ENCODE measurements at regions of chr1 and their contacts with region 1.

Region 1: DNA sequence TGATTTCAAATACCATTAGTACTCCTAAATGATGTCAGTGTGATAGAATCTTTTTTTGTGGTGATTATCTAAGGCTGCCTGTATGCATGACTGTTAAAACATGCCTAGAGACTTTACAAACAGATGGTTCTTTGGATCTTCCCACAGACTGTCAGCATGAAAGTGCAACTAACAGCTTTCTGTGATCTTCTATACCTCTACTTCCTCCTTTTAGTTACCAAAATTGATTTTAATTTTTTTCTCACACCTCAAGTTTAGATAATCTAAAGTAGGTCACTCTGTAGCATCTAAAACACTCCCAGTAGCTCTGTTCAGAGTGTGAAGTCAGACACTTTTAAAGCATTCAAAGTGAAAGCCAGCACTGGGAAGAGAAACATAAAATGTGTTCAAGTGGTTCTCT is 534.5 kb downstream of the PTPRC start:
- DNase-seq: no peak
- H3K4me3 Mint-ChIP-seq: no peak overlapping the region
- H3K27ac Mint-ChIP-seq: peak overlapping the region; percentile 24
- H3K4me1 Mint-ChIP-seq: peaks cover 39% of the 10 kb centered on the region
- H3K27me3 Mint-ChIP-seq: peaks cover 36% of the 10 kb centered on the region

Region 2: DNA sequence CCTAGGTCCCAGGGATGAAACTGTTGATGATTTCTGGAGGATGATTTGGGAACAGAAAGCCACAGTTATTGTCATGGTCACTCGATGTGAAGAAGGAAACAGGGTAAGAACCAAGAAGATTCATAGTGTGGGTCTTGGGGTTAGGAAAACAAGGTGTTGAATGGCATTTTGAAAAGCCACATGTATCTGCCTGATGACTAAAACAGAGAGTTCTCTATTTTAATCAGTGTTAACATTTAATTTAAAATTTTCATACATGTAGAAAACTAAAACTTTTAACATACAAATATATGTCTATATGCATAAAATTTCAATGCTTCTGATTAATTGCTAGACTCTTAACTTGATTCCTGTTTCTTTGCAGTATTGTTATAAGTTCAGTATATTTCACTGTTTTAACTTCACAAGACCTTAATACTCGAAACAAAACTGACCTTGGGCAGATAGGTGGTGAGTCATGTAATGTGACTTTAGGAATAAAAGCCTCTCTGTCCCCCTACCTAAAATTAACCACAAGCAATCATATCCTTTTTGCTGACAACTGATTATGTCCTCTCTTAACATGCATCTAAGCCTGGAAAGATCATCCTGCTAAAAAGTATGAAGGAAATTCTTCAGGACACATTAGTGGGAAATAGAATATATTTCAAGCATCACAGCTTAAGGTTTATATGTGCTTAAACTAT is 438.9 kb before region 1 on chr1:
- intact Hi-C with region 1: loop called (anchors 1 kb)
- DNase-seq: no peak
- H3K4me3 Mint-ChIP-seq: no peak overlapping the region
- H3K27ac Mint-ChIP-seq: peak overlapping the region; percentile 73
- H3K4me1 Mint-ChIP-seq: peaks cover 62% of the 10 kb centered on the region
- H3K27me3 Mint-ChIP-seq: no peaks in the 10 kb centered on the region

Region 3: DNA sequence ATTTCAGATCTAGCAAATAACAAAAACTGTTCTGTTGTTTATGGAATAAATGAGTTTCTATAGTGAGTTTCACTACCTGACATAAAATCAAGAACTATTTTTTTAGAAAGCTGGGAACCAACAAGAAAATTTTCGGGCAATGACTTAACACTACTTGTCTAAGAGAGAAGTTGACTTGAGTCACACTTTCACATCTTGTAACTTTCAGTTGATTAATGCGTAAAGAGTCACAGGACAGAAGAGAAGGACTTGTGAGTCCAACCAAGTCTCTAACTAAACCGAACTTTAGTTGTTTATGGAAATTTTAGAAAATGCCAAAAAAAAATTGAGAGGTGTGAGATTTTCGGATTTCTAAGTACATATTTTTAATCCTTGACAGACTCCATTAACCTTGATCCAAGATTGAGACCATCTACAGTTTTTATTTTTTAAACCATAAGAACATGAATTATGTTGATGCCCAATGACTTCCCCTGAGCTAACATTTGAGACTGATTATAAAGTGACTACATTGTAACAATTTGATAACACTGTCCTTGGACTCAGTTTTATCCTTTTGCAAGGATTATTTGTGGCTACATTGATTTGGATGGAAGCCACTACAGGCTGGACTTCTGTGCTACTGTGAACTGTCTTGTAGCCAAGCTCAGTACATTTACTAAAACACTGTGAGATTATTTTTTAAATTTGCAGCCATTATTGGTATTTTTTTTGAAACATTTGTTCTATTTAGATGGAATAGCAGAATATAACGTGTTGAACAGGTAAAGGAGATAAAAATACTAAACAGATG is 250.5 kb before region 1 on chr1:
- intact Hi-C with region 1: loop called (anchors 1 kb)
- DNase-seq: no peak
- H3K4me3 Mint-ChIP-seq: peak overlapping the region; percentile 55
- H3K27ac Mint-ChIP-seq: peak overlapping the region; percentile 71
- H3K4me1 Mint-ChIP-seq: peaks cover 73% of the 10 kb centered on the region
- H3K27me3 Mint-ChIP-seq: no peaks in the 10 kb centered on the region

Region 4: DNA sequence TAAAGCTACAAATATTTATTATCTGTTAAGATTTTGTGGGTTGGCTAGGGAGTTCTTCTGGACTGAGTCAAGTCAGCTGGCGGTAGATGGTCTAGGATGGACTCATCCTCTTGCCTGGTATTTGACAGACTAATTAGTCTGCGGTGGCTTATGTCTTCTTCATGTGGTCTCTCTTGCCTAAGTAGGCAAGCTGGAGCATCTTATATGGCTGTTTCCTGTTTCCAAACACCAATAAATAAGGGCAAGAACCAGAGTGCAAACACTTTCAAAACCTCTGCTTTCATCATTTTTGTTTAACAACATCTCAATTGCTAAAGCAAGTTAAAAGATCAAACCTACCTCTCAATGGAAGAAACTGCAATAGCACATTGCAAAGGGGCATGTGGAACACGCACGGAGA is 49.7 kb before region 1 on chr1:
- intact Hi-C with region 1: loop called (anchors 5 kb)
- DNase-seq: no peak
- H3K4me3 Mint-ChIP-seq: no peak overlapping the region
- H3K27ac Mint-ChIP-seq: no peak overlapping the region
- H3K4me1 Mint-ChIP-seq: peaks cover 11% of the 10 kb centered on the region
- H3K27me3 Mint-ChIP-seq: peaks cover 10% of the 10 kb centered on the region

Region 5: DNA sequence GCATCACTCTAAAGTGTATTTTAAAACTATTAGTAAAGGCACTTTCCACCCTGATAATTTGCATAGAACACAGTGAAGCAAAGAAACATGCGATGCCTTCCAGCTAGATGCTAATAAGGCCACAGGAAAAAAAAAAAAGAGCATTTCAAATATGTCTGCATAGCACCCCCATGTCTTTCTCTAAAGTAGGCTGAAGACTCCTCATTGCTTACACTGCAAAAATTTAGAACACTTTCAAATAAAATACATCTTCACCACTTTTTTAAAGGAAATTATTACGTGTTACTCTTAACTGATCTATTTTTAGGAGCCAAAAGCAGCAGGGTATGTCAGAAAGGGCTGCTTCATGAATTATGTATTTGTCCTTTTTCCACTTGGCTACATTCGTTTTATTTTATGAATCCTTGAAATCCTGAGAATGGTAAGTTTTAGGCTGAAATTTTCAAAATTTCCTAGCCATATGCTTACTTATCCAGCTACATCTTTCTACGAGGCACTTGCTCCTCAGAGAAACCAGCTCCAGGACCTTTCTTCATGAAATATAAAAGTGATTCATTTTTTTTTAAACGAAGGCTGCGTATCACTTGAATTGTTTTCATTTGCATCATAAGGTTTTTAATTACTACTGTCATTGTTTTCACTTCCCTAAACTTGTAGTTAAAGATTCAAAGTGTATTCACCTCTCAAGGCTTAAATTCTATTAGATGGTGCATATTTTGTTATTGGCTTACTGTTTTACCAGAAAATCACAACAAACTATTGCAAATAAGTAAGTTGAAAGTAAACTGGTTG is 21.5 kb before region 1 on chr1:
- intact Hi-C with region 1: no loop called
- DNase-seq: no peak
- H3K4me3 Mint-ChIP-seq: no peak overlapping the region
- H3K27ac Mint-ChIP-seq: no peak overlapping the region
- H3K4me1 Mint-ChIP-seq: no peaks in the 10 kb centered on the region
- H3K27me3 Mint-ChIP-seq: peaks cover 40% of the 10 kb centered on the region

Region 6: DNA sequence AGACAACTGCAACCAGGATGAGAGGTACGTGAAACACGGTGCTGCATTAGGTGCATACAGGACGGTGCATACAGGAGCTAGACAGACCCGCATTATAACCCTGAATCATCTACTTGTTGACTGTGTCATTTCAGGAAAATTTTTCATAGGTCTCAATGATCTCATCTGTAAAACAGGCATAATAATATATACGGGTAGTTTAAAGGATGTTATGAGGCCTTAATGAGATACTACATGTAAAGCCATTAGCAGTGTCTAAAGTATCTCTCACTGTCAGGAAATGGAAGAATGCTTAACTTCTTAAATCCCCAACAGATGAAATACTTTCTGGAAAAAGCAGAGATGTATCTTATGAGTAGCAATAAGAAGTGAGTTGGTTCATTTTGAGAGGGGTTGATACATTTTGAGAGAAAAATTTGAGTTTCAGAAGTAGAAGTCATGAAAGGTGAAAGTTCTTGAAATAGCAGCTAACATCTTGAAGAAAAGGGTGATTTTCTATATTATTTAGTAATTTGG is 135.0 kb after region 1 on chr1:
- intact Hi-C with region 1: loop called (anchors 5 kb)
- DNase-seq: no peak
- H3K4me3 Mint-ChIP-seq: no peak overlapping the region
- H3K27ac Mint-ChIP-seq: no peak overlapping the region
- H3K4me1 Mint-ChIP-seq: peaks cover 14% of the 10 kb centered on the region
- H3K27me3 Mint-ChIP-seq: peaks cover 21% of the 10 kb centered on the region

Region 7: GRCh38 chr1:199551967-199552565 is 378.7 kb after region 1 on chr1:
- intact Hi-C with region 1: no loop called
- DNase-seq: no peak
- H3K4me3 Mint-ChIP-seq: no peak overlapping the region
- H3K27ac Mint-ChIP-seq: no peak overlapping the region
- H3K4me1 Mint-ChIP-seq: no peaks in the 10 kb centered on the region
- H3K27me3 Mint-ChIP-seq: peaks cover 4% of the 10 kb centered on the region

Region 8: GRCh38 chr1:200150720-200151119 is 977.4 kb after region 1 on chr1:
- intact Hi-C with region 1: loop called (anchors 5 kb)
- DNase-seq: no peak
- H3K4me3 Mint-ChIP-seq: no peak overlapping the region
- H3K27ac Mint-ChIP-seq: peak overlapping the region; percentile 73
- H3K4me1 Mint-ChIP-seq: peaks cover 47% of the 10 kb centered on the region
- H3K27me3 Mint-ChIP-seq: no peaks in the 10 kb centered on the region

Measured in activated T-helper 2 cell treated with anti-CD3 and anti-CD28 coated beads, Interferon-gamma antibody, Interleukin-2, Interleukin-4, amounts not matched to agents 10 μg/mL and 5 μg/mL and 100 μg/mL, durations not matched to agents 14 hours and 24 hours and 36 hours (primary cell).